Dendritic cell treated with granulocyte-macrophage colony-stimulating factor and Interleukin-4, amounts not matched to agents 40 ng/mL and 50 ng/mL, for 4 days (primary cell): ENCODE measurements at regions of chr12 and their contacts with region 1.

Region 1: GRCh38 chr12:65556681-65557437 is 267.4 kb upstream of the HMGA2 start:
- H3K4me3 Mint-ChIP-seq: no peak overlapping the region
- H3K27ac Mint-ChIP-seq: no peak overlapping the region
- H3K4me1 Mint-ChIP-seq: peaks cover 7% of the 10 kb centered on the region
- H3K27me3 Mint-ChIP-seq: no peaks in the 10 kb centered on the region

Region 2: DNA sequence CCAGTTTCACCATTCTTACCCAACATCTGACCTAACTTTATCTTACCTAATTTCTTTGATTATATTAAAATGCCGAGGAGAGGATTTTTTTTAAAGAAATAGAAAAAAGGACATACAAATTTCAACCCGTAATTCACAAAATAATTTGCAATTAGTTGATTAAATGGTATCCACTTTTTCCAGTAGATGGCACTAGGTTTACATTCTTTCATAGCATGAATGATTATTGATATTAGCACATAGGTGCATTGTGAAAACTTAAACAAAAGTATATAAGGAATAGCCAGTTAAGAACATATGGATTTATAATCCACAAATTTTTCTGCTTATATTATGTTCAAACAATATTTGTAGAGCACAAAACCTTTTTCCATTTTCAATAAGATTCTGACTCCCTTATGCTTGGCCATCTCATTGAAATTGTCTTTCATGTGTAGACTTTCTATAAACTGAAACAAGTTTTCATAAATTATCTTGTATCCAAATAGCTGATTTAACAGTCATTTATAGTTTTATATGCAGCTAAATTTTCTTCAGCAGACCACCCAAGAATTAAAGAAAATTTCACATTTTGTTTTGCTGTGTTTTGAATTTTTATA is 243.0 kb before region 1 on chr12:
- intact Hi-C with region 1: loop called (anchors 10 kb)
- H3K4me3 Mint-ChIP-seq: no peak overlapping the region
- H3K27ac Mint-ChIP-seq: no peak overlapping the region
- H3K4me1 Mint-ChIP-seq: peaks cover under 1% of the 10 kb centered on the region
- H3K27me3 Mint-ChIP-seq: no peaks in the 10 kb centered on the region

Region 3: DNA sequence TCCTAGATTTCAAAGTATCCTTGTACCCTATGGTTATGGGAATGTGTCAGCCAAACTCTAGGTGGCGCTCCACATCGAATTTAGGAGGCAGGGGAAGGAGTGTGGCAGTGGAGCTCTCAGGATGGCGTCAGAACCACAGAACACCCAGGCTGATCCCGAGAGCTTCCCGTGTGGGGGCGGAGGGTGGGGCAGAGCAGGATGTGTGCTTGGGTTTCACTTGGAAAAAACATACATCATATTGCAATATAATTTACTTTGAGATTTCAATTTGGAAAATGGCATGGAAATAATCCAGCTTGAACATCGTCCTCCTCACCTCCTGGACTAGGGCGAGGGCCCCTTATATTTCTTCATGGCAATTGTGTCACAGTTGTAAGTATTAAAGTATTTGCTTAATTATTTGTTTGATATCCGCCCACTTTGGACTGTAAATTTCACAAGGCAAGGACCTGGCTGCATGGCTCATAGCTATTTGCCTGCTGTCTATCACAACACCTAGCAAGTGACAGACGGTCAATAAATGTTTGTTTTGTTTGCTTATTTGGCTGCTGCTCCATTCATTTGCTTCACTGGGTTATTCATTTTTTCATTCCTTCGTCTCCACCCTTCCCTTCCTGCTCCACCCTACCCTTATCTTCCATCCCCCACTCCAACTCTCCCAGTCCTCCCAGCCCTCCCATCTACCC is 45.9 kb after region 1 on chr12:
- intact Hi-C with region 1: no loop called
- H3K4me3 Mint-ChIP-seq: no peak overlapping the region
- H3K27ac Mint-ChIP-seq: no peak overlapping the region
- H3K4me1 Mint-ChIP-seq: no peaks in the 10 kb centered on the region
- H3K27me3 Mint-ChIP-seq: peaks cover 13% of the 10 kb centered on the region

Region 4: DNA sequence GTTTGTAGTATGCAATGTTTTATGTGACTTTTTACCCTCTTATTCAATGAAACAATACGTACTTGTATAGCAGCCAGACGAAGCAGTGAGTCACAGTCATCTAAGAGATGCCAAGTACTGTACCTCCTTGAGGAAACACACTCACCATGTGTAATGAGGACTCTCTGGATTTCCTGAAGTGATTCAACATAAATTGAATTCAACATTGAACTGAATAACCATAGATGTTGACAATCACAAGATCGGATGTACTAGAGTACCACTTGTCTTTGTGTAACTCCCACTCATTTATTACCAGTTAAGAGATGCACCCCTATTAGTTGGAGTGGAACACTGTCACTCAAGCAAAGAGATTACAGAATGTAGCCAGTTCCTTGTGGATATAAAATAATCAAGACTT is 92.3 kb after region 1 on chr12:
- intact Hi-C with region 1: no loop called
- H3K4me3 Mint-ChIP-seq: no peak overlapping the region
- H3K27ac Mint-ChIP-seq: no peak overlapping the region
- H3K4me1 Mint-ChIP-seq: peaks cover 9% of the 10 kb centered on the region
- H3K27me3 Mint-ChIP-seq: peaks cover 5% of the 10 kb centered on the region

Region 5: GRCh38 chr12:66035288-66035966 is 478.6 kb after region 1 on chr12:
- intact Hi-C with region 1: loop called (anchors 1 kb)
- H3K4me3 Mint-ChIP-seq: no peak overlapping the region
- H3K27ac Mint-ChIP-seq: no peak overlapping the region
- H3K4me1 Mint-ChIP-seq: no peaks in the 10 kb centered on the region
- H3K27me3 Mint-ChIP-seq: peaks cover 3% of the 10 kb centered on the region